Activated naive CD4-positive, alpha-beta T cell treated with anti-CD3 and anti-CD28 coated beads for 36 hours (primary cell): ENCODE measurements at regions of chr1 and their contacts with region 1.

Region 1: DNA sequence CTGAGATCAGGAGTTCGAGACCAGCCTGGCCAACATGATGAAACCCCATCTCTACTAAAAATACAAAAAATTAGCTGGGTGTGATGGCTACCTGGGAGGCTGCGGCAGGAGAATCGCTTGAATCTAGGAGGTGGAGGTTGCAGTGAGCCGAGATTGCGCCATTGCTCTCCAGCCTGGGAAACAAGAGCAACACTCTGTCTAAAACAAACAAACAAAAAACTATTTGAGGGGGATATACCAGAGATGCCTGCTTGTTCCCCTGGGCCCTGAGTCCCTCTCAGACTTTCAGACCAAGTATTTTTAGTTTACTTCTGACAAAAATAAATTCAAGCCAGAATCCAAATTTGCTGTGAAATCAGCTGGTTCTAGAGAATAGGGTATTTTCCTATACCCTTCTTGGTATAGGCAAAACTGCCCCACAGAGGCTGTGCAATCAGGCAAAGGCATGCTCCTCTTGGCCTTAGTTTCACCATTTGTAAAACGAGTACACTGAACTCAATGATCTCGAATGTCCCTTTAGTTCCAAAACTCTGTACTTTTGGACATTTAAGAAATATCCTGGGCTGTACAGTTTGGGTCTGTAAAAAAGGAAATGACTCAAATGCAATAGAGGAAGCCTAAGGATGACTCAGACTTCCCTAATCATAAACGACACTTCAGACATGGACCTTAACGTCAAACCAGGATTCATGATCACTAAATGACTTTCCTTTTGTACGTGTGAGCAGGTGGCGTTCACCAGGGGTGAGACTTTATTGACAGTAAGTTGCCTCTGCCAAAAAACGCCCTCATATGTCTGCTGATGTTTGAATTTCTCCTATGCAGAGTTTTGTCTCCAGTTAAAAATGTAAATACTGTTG is 16.1 kb downstream of the ENSA start:
- DNase-seq: peak; percentile 81
- H3K4me3 Mint-ChIP-seq: peak overlapping the region; percentile 41
- H3K27ac Mint-ChIP-seq: peak overlapping the region; percentile 93
- H3K4me1 Mint-ChIP-seq: peaks cover 64% of the 10 kb centered on the region
- H3K27me3 Mint-ChIP-seq: no peaks in the 10 kb centered on the region

Region 2: GRCh38 chr1:150567717-150568593 is 45.3 kb before region 1 on chr1:
- CTCF ChIA-PET with region 1: interaction called, 167 read pairs
- intact Hi-C with region 1: loop called (anchors 1 kb)
- DNase-seq: peak; percentile 67
- H3K4me3 Mint-ChIP-seq: peak overlapping the region; percentile 71
- H3K27ac Mint-ChIP-seq: peak overlapping the region; percentile 99
- H3K4me1 Mint-ChIP-seq: peaks cover 94% of the 10 kb centered on the region
- H3K27me3 Mint-ChIP-seq: no peaks in the 10 kb centered on the region

Region 3: GRCh38 chr1:150572918-150573647 is 40.2 kb before region 1 on chr1:
- CTCF ChIA-PET with region 1: interaction called, 167 read pairs
- intact Hi-C with region 1: loop called (anchors 1 kb)
- DNase-seq: no peak
- H3K4me3 Mint-ChIP-seq: peak overlapping the region; percentile 90
- H3K27ac Mint-ChIP-seq: peak overlapping the region; percentile 96
- H3K4me1 Mint-ChIP-seq: peaks cover 64% of the 10 kb centered on the region
- H3K27me3 Mint-ChIP-seq: no peaks in the 10 kb centered on the region

Region 4: DNA sequence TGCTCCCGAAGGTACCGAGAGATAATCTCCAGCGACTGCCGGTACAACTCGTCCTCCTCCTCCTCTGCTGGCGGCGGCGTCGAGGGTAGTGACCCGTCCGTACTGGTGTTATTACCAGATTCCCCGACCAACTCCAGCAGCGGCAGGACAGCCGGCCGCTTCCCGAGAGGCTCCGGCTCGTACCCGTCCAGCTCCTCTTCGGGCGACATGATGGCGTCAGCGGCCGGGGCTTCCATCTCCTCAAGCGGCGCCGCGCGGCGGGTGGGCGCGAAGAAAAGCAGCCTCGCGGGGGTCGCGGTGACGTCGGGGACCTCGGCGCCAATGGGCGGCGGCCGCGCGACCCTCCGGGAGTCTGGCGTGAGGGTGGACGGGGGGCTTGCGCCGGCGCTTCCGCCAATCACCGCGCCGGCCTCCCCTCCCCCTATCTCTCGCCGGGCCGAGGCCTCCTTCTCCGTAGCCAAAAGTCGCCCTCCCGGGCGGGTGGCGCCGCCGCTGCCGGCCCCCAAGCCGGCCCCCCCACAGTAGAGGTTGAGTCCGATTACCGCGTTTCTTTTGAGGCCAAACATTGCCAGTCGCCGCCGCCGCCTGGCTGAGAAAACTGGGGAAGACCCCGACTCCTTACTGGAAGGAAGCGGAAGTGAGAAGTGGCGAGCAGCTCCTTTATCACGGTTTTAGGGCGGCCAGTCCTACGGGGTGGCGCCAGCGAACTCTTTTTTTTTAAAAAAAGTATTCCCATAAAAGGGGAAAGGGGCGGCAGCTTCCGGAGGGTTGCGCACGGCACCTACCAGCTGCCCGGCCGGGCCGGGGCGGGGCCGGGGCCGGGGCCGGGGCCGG is 34.1 kb before region 1 on chr1 and contains the start of gene MCL1:
- CTCF ChIA-PET with region 1: interaction called, 6 read pairs
- intact Hi-C with region 1: loop called (anchors 1 kb)
- DNase-seq: peak; percentile 95
- H3K4me3 Mint-ChIP-seq: peak within 1 kb of the TSS; percentile 90
- H3K27ac Mint-ChIP-seq: peak within 1 kb of the TSS; percentile 99
- H3K4me1 Mint-ChIP-seq: peaks cover 19% of the 10 kb centered on the region
- H3K27me3 Mint-ChIP-seq: no peaks in the 10 kb centered on the region
- total RNA-seq, gene MCL1: 228 to 235 TPM

Region 5: GRCh38 chr1:150596095-150596892 is 17.0 kb before region 1 on chr1:
- CTCF ChIA-PET with region 1: no interaction called
- intact Hi-C with region 1: no loop called
- DNase-seq: no peak
- H3K4me3 Mint-ChIP-seq: no peak overlapping the region
- H3K27ac Mint-ChIP-seq: no peak overlapping the region
- H3K4me1 Mint-ChIP-seq: peaks cover 5% of the 10 kb centered on the region
- H3K27me3 Mint-ChIP-seq: no peaks in the 10 kb centered on the region

Region 6: DNA sequence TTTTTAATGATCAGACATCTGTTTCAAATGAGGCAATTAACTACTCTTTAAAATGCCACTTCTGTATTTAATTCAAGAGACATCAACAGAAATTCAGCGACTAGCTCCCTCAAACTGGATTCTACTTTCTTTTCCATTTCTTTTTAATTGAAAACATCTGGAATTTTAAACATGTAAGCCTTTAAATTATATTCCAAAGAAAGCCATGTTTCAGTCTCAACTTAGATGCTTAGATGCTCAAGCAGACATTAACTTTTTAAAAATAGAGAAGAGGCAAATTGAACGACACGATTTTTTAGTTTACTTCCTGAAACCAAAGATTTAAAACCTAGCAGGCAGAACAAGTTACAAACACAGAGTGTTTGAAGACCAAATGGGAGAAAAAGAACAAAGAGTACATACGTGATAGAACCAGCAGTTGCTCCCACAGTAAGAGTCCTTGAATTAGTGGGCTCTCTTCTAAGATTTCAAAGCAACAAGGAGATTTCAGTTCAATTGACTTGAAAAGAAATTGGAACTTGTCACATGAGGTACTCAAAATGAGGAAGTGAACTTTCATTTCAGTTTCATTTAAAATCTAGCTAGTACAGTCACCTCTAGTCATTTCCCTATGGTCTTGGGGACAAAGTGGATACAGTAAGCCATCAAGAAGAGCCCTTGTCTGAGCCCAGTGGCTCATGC is 152.1 kb after region 1 on chr1 and contains the start of gene CTSS:
- CTCF ChIA-PET with region 1: no interaction called
- intact Hi-C with region 1: loop called (anchors 1 kb)
- DNase-seq: no peak
- H3K4me3 Mint-ChIP-seq: peak within 1 kb of the TSS; percentile 90
- H3K27ac Mint-ChIP-seq: peak within 1 kb of the TSS; percentile 94
- H3K4me1 Mint-ChIP-seq: peaks cover 48% of the 10 kb centered on the region
- H3K27me3 Mint-ChIP-seq: no peaks in the 10 kb centered on the region
- total RNA-seq, gene CTSS: 37.0 to 37.7 TPM

Region 7: DNA sequence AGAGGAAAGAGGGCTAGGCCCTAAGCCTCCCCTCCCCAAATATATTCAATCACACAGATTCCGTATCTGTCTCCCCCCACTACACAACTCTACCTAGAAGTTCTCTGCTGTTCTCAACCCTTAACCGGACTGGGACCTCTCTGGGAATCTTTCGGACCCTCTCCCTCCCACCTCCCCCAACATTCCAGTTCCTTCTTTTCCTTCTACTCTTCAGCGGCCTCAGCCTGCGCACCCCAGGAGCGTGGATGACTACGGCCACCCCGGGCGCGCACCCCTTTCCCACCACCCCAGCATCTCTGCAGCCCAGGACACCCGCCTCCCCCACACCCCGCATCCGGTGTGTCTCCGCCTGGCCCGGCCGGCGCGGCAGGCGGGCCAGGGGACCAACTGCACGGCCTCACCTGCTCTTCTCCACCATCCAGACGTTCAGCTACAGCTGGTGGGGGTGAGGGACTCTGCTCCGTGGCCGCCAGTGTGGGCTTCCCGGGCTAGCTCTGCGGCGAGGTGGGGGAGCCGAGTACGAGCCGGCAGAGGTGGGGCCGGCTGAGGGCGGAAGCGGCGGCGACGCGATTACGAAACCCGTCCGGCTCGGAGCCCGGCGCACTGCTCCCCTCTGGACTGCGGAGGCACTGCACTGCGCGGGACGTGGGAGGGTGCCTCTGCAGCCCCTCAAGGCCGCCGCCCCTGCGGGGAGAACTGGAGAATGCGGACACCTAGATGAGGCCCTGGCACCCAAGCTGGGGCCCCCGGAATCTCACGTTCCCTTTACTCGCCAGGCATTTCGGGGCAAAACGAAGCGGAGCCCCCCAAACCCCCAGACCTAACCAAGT is 446.0 kb after region 1 on chr1 and contains the start of gene CDC42SE1:
- CTCF ChIA-PET with region 1: no interaction called
- intact Hi-C with region 1: loop called (anchors 1 kb)
- DNase-seq: peak; percentile 86
- H3K4me3 Mint-ChIP-seq: peak within 1 kb of the TSS; percentile 86
- H3K27ac Mint-ChIP-seq: peak within 1 kb of the TSS; percentile 98
- H3K4me1 Mint-ChIP-seq: peaks cover 53% of the 10 kb centered on the region
- H3K27me3 Mint-ChIP-seq: no peaks in the 10 kb centered on the region
- total RNA-seq, gene CDC42SE1: 98.1 to 99.0 TPM